Endothelial cell of umbilical vein (primary cell): ENCODE measurements at regions of chr17 and their contacts with region 1.

Region 1: GRCh38 chr17:4733073-4733531 is 1.9 kb downstream of the MED11 start:
- DNase-seq: no peak
- H3K4me3 ChIP-seq: no peak overlapping the region
- H3K27ac ChIP-seq: no peak overlapping the region
- H3K4me1 ChIP-seq: peaks cover 8% of the 10 kb centered on the region
- H3K27me3 ChIP-seq: peaks cover under 1 to 1% of the 10 kb centered on the region in 2 experiments
- CTCF ChIP-seq: no peak
- POLR2A ChIP-seq: no peak

Region 2: GRCh38 chr17:4771519-4772234 is 38.6 kb after region 1 on chr17 and contains the start of gene TM4SF5:
- CTCF ChIA-PET with region 1: no interaction called
- POLR2A ChIA-PET with region 1: no interaction called
- dilution Hi-C with region 1: no loop called
- intact Hi-C with region 1: no loop called
- DNase-seq: no peak
- H3K4me3 ChIP-seq: no peak within 1 kb of the TSS
- H3K27ac ChIP-seq: no peak within 1 kb of the TSS
- H3K4me1 ChIP-seq: no peaks in the 10 kb centered on the region
- H3K27me3 ChIP-seq: peaks cover 3 to 6% of the 10 kb centered on the region in 2 experiments
- CTCF ChIP-seq: no peak
- POLR2A ChIP-seq: no peak
- total RNA-seq, gene TM4SF5: not detected in 2 replicates

Region 3: DNA sequence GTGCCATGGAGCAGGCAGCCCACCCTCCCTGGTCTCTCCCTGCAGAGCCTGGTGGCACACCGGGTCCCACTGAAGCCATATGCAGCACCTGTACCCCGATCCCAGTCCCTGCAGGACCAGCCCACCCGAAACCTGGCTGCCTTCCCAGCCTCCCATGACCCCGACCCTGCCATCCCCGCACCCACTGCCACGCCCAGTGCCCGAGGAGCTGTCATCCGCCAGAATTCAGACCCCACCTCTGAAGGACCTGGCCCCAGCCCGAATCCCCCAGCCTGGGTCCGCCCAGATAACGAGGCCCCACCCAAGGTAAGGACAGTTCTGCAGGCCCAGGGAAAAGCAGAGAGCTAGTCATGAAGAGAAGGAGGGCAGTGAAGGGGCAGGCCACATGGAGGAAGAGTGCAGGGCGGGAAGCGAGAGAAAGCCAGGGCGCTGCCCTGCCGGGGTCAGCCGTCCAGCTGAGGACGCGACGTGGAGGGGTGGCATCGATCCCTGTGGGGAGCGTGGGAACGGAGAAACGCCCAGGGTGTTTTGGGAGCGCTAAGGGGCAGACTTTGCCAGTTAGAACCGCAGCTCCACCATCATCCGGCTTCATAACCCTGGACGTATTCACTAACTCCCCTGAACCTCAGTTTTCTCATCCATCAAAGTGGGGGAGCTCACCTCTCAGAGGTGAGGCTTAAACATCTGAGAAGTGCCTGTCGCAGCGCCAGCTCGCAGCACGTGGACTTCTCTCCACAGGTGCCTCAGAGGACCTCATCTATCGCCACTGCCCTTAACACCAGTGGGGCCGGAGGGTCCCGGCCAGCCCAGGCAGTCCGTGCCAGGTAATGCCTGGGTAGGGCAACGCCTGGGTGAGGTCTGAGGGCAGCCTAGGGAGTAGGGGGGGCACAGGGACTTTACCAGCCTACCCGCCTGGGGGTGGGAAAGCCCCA is 158.6 kb after region 1 on chr17:
- CTCF ChIA-PET with region 1: interaction called, 4 read pairs
- POLR2A ChIA-PET with region 1: no interaction called
- dilution Hi-C with region 1: no loop called
- intact Hi-C with region 1: loop called (anchors 1 kb)
- DNase-seq: no peak
- H3K4me3 ChIP-seq: no peak overlapping the region
- H3K27ac ChIP-seq: no peak overlapping the region
- H3K4me1 ChIP-seq: no peaks in the 10 kb centered on the region
- H3K27me3 ChIP-seq: no peaks in the 10 kb centered on the region
- CTCF ChIP-seq: no peak
- POLR2A ChIP-seq: no peak

Region 4: GRCh38 chr17:4903051-4903818 is 170.1 kb after region 1 on chr17 and contains the start of gene CHRNE:
- CTCF ChIA-PET with region 1: interaction called, 24 read pairs
- POLR2A ChIA-PET with region 1: no interaction called
- dilution Hi-C with region 1: no loop called
- intact Hi-C with region 1: loop called (anchors 5 kb)
- DNase-seq: peak; percentile 76
- H3K4me3 ChIP-seq: no peak within 1 kb of the TSS
- H3K27ac ChIP-seq: no peak within 1 kb of the TSS
- H3K4me1 ChIP-seq: peaks cover 10% of the 10 kb centered on the region
- H3K27me3 ChIP-seq: no peaks in the 10 kb centered on the region
- CTCF ChIP-seq: peak; percentile 63 to 77
- POLR2A ChIP-seq: no peak
- total RNA-seq, gene CHRNE: 0.76 and 0.84 TPM in 2 replicates